ENCODE measurements at regions of chr16 and their contacts with region 1.

Region 1: DNA sequence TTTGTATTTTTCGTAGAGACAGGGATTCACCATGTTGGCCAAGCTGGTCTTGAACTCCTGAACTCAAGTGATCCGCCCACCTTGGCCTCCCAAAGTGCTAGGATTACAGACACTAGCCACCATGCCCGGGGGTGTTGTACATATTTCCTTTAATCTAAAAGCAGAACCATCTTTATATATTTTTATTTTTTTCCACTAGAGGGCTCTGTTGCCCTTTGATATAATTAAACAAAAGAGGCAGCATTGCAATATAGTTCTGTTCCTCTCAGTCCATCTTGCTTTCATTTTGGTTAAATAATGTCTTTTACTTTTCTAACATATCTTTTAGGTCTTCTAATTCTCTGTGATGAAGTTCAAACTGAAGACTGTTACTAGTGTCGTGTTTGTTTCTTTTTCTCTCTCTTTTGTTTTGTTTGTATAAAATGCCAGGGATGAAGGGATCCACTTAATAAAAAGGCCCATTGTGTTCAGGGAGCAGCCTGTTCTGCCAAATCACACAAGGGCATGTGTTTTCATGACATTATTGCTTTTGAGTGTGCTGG is 23.4 kb downstream of the WWOX start:
- DNase-seq: no peak
- ATAC-seq: peak; percentile 73

Region 2: GRCh38 chr16:78235168-78235800 is 112.4 kb after region 1 on chr16:
- intact Hi-C with region 1: loop called (anchors 2 kb)
- DNase-seq: no peak
- ATAC-seq: peak; percentile 47

Region 3: GRCh38 chr16:78437352-78437968 is 314.6 kb after region 1 on chr16:
- intact Hi-C with region 1: loop called (anchors 5 kb)
- DNase-seq: no peak
- ATAC-seq: no peak

Region 4: DNA sequence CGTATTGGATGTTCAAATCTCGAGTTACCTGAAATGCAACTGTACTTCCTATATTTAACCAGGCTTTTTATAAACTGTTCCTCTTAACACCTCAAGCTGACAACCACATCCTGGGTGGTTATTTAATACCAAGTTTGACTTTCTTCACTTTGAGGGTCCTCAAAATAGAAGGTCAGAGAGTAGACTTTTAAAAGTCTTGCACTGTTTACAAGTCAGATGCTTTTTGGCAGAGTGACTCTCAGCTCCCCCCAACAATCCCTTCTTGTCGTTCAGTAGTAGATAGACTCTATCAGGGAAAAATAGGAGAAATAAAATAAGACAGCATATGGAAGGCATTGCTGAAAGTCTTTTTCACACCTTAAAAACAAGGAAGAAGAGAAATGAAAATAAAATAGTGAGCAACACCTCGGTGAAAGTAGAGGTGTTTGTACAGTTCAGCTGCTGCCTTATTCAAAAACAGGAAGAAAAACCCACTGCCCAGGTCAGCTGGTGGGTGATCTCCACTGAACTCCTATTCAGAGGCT is 627.0 kb after region 1 on chr16:
- intact Hi-C with region 1: loop called (anchors 10 kb)
- DNase-seq: no peak
- ATAC-seq: no peak